Common myeloid progenitor, CD34-positive (primary cell): ENCODE measurements at regions of chr3 and their contacts with region 1.

Region 1: DNA sequence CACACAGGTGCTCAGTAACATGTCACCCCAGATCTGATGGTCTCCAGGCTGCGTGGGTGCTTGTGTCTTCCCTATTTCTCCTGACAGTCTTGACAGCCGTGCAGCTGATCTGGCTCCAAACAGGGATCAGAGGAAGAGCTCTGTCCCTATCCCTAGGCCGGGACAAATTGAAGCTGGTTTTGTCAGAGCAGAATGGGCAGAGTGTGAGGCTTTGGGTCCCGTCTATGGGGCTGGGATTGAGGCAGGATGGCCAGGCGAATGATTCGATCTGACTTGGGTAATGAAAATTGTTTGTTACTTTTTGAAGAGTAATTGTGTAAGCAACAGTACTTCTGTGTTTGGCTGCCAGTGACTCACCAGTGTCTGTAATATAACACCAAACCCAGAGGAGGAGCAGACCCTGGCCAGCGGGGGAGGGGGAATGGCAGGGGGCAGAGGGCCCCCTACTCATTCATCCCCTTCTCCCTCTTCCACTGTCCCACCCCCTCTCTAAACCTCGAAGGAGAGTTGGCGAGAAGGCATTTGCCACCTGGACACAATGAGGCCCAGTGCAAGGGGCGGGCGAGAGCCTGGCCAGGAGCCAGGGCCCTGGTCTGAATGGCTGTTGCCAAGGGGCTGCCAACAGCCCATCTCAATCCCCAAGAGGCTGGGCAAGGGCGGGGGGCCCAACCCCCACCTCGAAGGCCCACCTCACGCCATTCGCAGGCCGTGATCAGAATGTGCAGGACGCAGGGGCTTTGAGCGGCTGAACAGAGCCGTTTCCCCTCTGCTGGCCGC is 4.9 kb upstream of the MAGEF1 start:
- DNase-seq: no peak
- H3K4me3 ChIP-seq: no peak overlapping the region
- H3K27ac ChIP-seq: no peak overlapping the region
- H3K4me1 ChIP-seq: peaks cover 0 to 23% (median 7%) of the 10 kb centered on the region in 4 experiments
- H3K27me3 ChIP-seq: no peaks in the 10 kb centered on the region

Region 2: DNA sequence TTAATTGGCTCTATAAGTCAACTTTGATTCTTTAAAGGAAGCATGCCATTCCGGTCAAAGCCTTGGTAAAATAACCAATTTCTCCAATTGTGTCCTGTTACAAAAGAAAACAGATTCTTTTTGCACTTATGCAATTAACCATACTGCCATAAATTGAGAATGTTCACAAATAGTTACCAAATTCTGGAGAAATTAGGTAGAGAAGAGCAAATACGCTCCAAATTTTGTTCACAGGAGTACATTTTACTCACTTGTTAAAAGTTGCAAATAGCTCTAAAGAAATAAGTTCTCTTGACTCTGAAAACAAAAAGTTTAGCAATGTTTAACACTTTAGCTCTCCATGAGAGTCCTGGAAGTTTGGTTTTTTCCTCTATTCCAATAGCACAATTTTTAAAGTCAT is 16.1 kb before region 1 on chr3:
- CTCF ChIA-PET with region 1: no interaction called
- POLR2A ChIA-PET with region 1: no interaction called
- DNase-seq: no peak
- H3K4me3 ChIP-seq: no peak overlapping the region
- H3K27ac ChIP-seq: no peak overlapping the region
- H3K4me1 ChIP-seq: peaks cover 0 to 12% (median 0%) of the 10 kb centered on the region in 4 experiments
- H3K27me3 ChIP-seq: no peaks in the 10 kb centered on the region

Region 3: GRCh38 chr3:184727357-184728009 is 10.7 kb after region 1 on chr3:
- CTCF ChIA-PET with region 1: interaction called, 35 read pairs
- POLR2A ChIA-PET with region 1: no interaction called
- DNase-seq: peak; percentile 81 to 87 (median 82)
- H3K4me3 ChIP-seq: no peak overlapping the region
- H3K27ac ChIP-seq: no peak overlapping the region
- H3K4me1 ChIP-seq: no peaks in the 10 kb centered on the region
- H3K27me3 ChIP-seq: no peaks in the 10 kb centered on the region

Region 4: DNA sequence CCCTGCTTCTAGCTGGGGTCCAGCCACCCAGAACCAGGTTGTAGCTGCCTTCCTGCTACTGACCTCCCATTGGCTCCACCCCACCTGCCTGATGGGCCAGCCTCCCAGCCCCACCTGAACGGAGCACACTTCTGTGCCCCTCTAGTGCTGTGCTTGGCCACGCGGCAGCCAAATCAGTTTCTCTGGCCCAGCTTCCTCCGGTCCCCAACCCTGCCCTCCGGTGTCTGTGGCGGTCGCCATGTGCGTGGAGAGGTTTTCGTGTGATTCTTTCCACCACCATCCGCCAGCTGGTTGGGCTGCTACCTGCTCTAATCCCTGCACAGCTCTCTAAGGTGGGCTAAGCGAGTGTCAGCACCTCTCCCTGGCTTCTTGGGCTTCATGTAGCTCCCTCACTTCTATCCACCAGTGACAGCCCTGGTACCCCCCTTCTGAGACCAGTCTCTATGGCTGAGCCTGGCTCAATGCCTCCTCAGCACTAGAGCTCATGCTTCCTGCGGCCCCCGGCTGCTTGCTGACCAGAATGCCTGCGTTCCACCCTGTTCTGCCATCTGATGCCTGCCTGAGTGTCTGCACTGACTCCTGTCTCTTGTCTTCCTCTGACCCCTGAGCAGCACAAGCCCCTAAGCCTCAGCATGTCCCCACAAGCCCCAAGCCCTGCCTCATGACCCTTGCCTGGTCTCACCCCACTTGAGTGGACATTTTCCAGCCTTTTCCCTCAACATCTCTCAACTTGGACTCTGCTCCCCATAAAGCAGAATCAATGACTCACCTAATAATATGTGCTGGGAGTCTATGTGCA is 18.3 kb after region 1 on chr3:
- CTCF ChIA-PET with region 1: interaction called, 11 read pairs
- POLR2A ChIA-PET with region 1: no interaction called
- DNase-seq: no peak
- H3K4me3 ChIP-seq: no peak overlapping the region
- H3K27ac ChIP-seq: no peak overlapping the region
- H3K4me1 ChIP-seq: no peaks in the 10 kb centered on the region
- H3K27me3 ChIP-seq: no peaks in the 10 kb centered on the region

Region 5: GRCh38 chr3:185188816-185189215 is 472.0 kb after region 1 on chr3:
- CTCF ChIA-PET with region 1: no interaction called
- POLR2A ChIA-PET with region 1: no interaction called
- DNase-seq: no peak
- H3K4me3 ChIP-seq: no peak overlapping the region
- H3K27ac ChIP-seq: no peak overlapping the region
- H3K4me1 ChIP-seq: no peaks in the 10 kb centered on the region
- H3K27me3 ChIP-seq: no peaks in the 10 kb centered on the region

Region 6: GRCh38 chr3:185717121-185717520 is 1000.3 kb after region 1 on chr3:
- CTCF ChIA-PET with region 1: no interaction called
- POLR2A ChIA-PET with region 1: no interaction called
- DNase-seq: no peak
- H3K4me3 ChIP-seq: no peak overlapping the region
- H3K27ac ChIP-seq: no peak overlapping the region
- H3K4me1 ChIP-seq: peaks cover 0 to 25% (median 16%) of the 10 kb centered on the region in 4 experiments
- H3K27me3 ChIP-seq: no peaks in the 10 kb centered on the region